Breast epithelium (tissue), 4 donors: ENCODE measurements at regions of chr3 and their contacts with region 1.

Region 1: DNA sequence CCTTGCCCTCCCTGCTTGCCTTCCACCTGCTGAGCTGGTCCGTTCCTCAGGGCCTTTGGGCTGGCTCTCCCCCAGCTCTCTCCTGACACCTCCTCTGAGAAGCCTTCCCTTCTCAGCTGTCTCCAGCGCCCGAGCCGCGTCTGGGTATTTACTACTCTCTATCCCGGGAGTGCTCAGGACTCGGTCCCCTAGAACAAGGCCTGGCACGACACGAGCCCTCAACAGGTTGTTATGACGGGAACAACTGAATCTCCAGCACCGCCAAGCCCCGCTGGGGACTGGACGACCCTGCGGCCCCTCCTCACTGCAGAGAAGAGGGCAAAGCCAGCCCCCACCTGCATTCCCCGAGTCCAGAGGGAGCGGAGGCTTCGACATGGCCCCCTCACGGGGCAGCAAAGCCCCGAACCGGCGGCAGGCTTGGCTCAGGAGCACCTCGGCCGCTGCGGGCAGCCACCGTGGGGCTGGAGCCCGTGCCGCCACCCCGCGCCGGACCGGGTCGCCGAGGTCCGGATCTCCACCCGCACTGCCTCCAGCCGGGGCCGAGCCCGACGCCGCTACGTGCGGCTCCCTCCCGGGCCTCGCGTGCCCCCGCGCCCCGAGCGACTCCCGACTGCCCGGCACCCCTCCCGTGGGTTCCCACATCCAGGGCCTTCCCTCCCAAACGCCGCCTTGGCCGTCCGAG is 792 bp downstream of the TPRA1 start:
- DNase-seq: no peak
- H3K4me3 ChIP-seq: peak overlapping the region; percentile 90 to 98 (median 94)
- H3K27ac ChIP-seq: peak overlapping the region; percentile 92 to 97
- H3K4me1 ChIP-seq: peaks cover 14% of the 10 kb centered on the region in 2 donors
- H3K27me3 ChIP-seq: no peaks in the 10 kb centered on the region
- CTCF ChIP-seq: no peak
- POLR2A ChIP-seq: no peak

Region 2: GRCh38 chr3:127264292-127264691 is 325.4 kb before region 1 on chr3:
- intact Hi-C with region 1: no loop called
- DNase-seq: no peak
- H3K4me3 ChIP-seq: no peak overlapping the region
- H3K27ac ChIP-seq: no peak overlapping the region
- H3K4me1 ChIP-seq: peaks cover 0 to 3% of the 10 kb centered on the region in 2 donors
- H3K27me3 ChIP-seq: no peaks in the 10 kb centered on the region
- CTCF ChIP-seq: no peak
- POLR2A ChIP-seq: no peak

Region 3: DNA sequence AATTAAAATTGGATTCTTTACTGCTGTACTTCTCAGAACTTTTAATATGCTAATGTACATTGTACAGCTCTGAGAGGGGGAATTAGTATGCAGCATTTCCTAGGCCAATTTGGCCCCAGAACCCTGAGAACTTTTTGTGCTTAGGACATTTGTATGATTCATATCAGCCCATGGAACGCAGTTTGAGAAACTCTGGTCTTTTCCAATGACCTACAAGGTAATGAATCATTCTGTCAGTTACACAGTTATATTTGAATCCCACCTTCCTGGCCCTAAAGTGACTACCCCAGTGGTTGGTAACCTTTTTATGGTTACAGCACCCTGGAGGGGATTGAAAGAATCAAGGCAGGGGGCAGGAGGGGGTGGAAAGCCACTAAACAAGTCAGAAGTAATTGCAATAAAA is 299.7 kb after region 1 on chr3:
- intact Hi-C with region 1: loop called (anchors 5 kb)
- DNase-seq: no peak
- H3K4me3 ChIP-seq: no peak overlapping the region
- H3K27ac ChIP-seq: no peak overlapping the region
- H3K4me1 ChIP-seq: no peaks in the 10 kb centered on the region
- H3K27me3 ChIP-seq: no peaks in the 10 kb centered on the region
- CTCF ChIP-seq: no peak
- POLR2A ChIP-seq: no peak

Region 4: GRCh38 chr3:128207951-128208558 is 618.3 kb after region 1 on chr3:
- intact Hi-C with region 1: no loop called
- DNase-seq: no peak
- H3K4me3 ChIP-seq: no peak overlapping the region
- H3K27ac ChIP-seq: no peak overlapping the region
- H3K4me1 ChIP-seq: no peaks in the 10 kb centered on the region
- H3K27me3 ChIP-seq: no peaks in the 10 kb centered on the region
- CTCF ChIP-seq: no peak
- POLR2A ChIP-seq: no peak